CD4-positive, alpha-beta T cell (primary cell): ENCODE measurements at regions of chr10 and their contacts with region 1.

Region 1: DNA sequence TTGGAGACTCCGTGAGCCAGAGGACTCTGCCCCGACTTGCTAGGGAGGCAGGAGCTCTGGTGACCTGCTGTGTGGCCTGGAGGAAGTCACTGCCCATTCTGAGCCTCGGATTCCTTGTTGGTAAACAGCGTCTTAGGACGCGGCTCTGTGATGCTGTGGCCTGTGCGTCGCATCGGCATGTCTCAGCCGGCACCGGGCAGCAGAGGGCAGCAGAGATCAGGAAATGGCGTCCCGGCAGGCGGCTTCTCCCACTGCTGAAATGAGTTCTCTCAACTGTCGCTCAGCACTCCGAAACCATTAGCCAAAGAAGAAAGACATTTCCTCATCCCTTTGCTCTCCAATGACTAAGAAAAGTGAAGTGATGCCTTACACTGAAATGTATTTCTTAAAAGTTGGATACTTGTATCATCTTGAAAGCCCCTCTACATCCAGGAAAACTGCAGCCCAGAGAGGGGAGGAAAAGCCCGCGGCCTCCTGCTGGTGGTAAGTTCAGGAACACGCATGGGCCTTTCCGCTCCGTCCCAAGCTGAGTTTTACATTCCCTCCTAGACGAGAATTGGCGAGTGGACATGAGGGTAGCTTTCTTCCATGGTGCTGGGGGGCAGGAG is 91.7 kb downstream of the WDR11 start:
- DNase-seq: peak; percentile 41 to 79 (median 66)
- ATAC-seq: peak; percentile 86
- H3K4me3 ChIP-seq: no peak overlapping the region
- H3K4me3 Mint-ChIP-seq: no peak overlapping the region
- H3K27ac ChIP-seq: no peak overlapping the region
- H3K27ac Mint-ChIP-seq: no peak overlapping the region
- H3K4me1 ChIP-seq: peaks cover 8% of the 10 kb centered on the region
- H3K4me1 Mint-ChIP-seq: peaks cover 6% of the 10 kb centered on the region
- H3K27me3 ChIP-seq: peaks cover 0 to 3% of the 10 kb centered on the region in 2 experiments
- H3K27me3 Mint-ChIP-seq: peaks cover 26% of the 10 kb centered on the region
- CTCF ChIP-seq: peak; percentile 73

Region 2: GRCh38 chr10:121063744-121064143 is 120.8 kb after region 1 on chr10:
- CTCF ChIA-PET with region 1: no interaction called
- POLR2A ChIA-PET with region 1: no interaction called
- intact Hi-C with region 1: no loop called
- DNase-seq: no peak
- ATAC-seq: no peak
- H3K4me3 ChIP-seq: no peak overlapping the region
- H3K4me3 Mint-ChIP-seq: no peak overlapping the region
- H3K27ac ChIP-seq: no peak overlapping the region
- H3K27ac Mint-ChIP-seq: no peak overlapping the region
- H3K4me1 ChIP-seq: no peaks in the 10 kb centered on the region
- H3K4me1 Mint-ChIP-seq: no peaks in the 10 kb centered on the region
- H3K27me3 ChIP-seq: no peaks in the 10 kb centered on the region
- H3K27me3 Mint-ChIP-seq: no peaks in the 10 kb centered on the region
- CTCF ChIP-seq: no peak

Region 3: DNA sequence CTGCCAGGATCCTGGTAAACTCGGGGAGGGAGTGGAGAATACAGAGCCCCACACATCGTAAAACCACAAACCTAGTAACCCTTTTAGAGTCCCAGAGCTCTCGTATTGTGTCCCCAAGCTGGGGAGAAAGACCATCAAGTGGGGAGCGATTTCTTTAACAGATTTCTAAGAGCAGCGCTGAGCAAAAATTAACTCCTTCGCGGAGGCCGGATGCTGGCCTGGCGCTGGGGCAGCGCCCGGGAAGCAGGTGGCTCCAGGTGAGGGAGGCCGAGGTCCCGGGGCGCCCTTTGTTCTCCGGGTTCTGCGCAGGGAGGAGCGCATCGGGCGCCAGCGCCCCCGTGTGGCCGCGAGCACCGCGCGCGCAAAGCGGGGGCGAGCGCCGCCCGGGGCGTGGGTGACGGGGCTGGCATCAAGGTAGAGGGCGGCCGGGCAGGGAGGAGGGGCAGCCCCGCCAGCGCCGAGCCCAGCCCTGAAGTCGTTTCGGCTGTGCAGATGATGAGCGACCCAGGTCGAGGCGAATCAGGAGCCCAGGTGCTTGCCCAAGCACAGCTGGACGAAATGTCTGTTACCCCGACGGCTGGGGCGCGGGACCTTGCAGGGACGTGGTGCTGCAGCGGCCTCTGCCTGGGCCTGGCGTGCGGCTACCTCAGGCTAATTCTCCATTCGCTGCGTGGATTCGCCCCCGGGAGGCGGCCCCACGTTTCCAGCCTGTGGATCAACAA is 665.7 kb after region 1 on chr10:
- CTCF ChIA-PET with region 1: no interaction called
- POLR2A ChIA-PET with region 1: no interaction called
- intact Hi-C with region 1: loop called in 1 of 2 experiments (anchors 5 kb)
- DNase-seq: peak in 4 of 14 experiments; percentile 3 to 35 (median 20)
- ATAC-seq: no peak
- H3K4me3 ChIP-seq: no peak overlapping the region
- H3K4me3 Mint-ChIP-seq: no peak overlapping the region
- H3K27ac ChIP-seq: no peak overlapping the region
- H3K27ac Mint-ChIP-seq: no peak overlapping the region
- H3K4me1 ChIP-seq: peaks cover 2% of the 10 kb centered on the region
- H3K4me1 Mint-ChIP-seq: no peaks in the 10 kb centered on the region
- H3K27me3 ChIP-seq: peaks cover 9 to 23% of the 10 kb centered on the region in 2 experiments
- H3K27me3 Mint-ChIP-seq: peaks cover 63% of the 10 kb centered on the region
- CTCF ChIP-seq: peak; percentile 40

Region 4: GRCh38 chr10:121734589-121735045 is 791.7 kb after region 1 on chr10:
- CTCF ChIA-PET with region 1: no interaction called
- POLR2A ChIA-PET with region 1: no interaction called
- intact Hi-C with region 1: loop called (anchors 2 to 5 kb)
- DNase-seq: peak in 2 of 14 experiments; percentile 16 to 21
- ATAC-seq: no peak
- H3K4me3 ChIP-seq: no peak overlapping the region
- H3K4me3 Mint-ChIP-seq: no peak overlapping the region
- H3K27ac ChIP-seq: no peak overlapping the region
- H3K27ac Mint-ChIP-seq: no peak overlapping the region
- H3K4me1 ChIP-seq: no peaks in the 10 kb centered on the region
- H3K4me1 Mint-ChIP-seq: peaks cover 4% of the 10 kb centered on the region
- H3K27me3 ChIP-seq: peaks cover 0 to 4% of the 10 kb centered on the region in 2 experiments
- H3K27me3 Mint-ChIP-seq: peaks cover 39% of the 10 kb centered on the region
- CTCF ChIP-seq: peak; percentile 59

Region 5: GRCh38 chr10:121886997-121887622 is 944.2 kb after region 1 on chr10:
- CTCF ChIA-PET with region 1: no interaction called
- POLR2A ChIA-PET with region 1: no interaction called
- intact Hi-C with region 1: loop called (anchors 2 kb)
- DNase-seq: peak in 12 of 14 experiments; percentile 7 to 61 (median 28)
- ATAC-seq: peak; percentile 57
- H3K4me3 ChIP-seq: no peak overlapping the region
- H3K4me3 Mint-ChIP-seq: no peak overlapping the region
- H3K27ac ChIP-seq: no peak overlapping the region
- H3K27ac Mint-ChIP-seq: no peak overlapping the region
- H3K4me1 ChIP-seq: no peaks in the 10 kb centered on the region
- H3K4me1 Mint-ChIP-seq: peaks cover 5% of the 10 kb centered on the region
- H3K27me3 ChIP-seq: no peaks in the 10 kb centered on the region
- H3K27me3 Mint-ChIP-seq: no peaks in the 10 kb centered on the region
- CTCF ChIP-seq: peak; percentile 65

Region 6: DNA sequence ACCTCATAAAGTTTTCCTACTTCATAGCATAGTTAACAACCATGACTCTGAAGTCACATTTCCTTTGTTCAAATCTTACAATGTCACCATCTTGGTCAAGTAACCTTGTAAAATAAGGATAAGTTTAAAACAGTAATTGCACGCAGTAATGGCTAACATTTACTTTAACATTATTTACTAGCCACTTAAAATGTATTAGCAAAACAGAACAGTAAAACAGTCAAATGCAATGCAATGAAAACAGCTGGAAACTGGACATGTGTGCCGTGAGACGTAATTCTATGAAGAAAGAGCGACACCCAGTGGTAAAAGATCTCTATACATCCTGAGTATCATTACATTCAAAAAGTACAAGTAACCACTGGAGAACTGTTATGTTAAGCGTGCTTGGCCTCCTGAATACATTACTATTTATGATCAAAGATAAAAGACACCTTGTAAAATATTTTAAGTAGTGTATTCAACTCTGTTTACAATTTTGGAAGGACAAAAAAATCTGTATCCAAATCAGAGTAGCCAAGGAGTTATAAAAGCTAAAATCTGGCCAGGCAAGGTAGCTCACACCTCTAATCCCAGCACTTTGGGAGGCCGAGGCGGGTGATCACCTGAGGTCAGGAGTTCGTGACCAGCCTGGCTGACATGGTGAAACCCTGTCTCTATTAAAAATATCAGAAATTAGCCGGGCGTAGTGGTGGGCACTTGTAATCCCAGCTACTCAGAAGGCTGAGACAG is 957.7 kb after region 1 on chr10:
- CTCF ChIA-PET with region 1: interaction called, 4 read pairs
- POLR2A ChIA-PET with region 1: no interaction called
- intact Hi-C with region 1: loop called (anchors 1 to 2 kb)
- DNase-seq: peak in 4 of 14 experiments; percentile 7 to 63 (median 54)
- ATAC-seq: peak; percentile 60
- H3K4me3 ChIP-seq: no peak overlapping the region
- H3K4me3 Mint-ChIP-seq: no peak overlapping the region
- H3K27ac ChIP-seq: no peak overlapping the region
- H3K27ac Mint-ChIP-seq: no peak overlapping the region
- H3K4me1 ChIP-seq: no peaks in the 10 kb centered on the region
- H3K4me1 Mint-ChIP-seq: peaks cover 6% of the 10 kb centered on the region
- H3K27me3 ChIP-seq: no peaks in the 10 kb centered on the region
- H3K27me3 Mint-ChIP-seq: no peaks in the 10 kb centered on the region
- CTCF ChIP-seq: peak; percentile 90